CD8-positive, alpha-beta T cell (primary cell): ENCODE measurements at regions of chr1 and their contacts with region 1.

Region 1: DNA sequence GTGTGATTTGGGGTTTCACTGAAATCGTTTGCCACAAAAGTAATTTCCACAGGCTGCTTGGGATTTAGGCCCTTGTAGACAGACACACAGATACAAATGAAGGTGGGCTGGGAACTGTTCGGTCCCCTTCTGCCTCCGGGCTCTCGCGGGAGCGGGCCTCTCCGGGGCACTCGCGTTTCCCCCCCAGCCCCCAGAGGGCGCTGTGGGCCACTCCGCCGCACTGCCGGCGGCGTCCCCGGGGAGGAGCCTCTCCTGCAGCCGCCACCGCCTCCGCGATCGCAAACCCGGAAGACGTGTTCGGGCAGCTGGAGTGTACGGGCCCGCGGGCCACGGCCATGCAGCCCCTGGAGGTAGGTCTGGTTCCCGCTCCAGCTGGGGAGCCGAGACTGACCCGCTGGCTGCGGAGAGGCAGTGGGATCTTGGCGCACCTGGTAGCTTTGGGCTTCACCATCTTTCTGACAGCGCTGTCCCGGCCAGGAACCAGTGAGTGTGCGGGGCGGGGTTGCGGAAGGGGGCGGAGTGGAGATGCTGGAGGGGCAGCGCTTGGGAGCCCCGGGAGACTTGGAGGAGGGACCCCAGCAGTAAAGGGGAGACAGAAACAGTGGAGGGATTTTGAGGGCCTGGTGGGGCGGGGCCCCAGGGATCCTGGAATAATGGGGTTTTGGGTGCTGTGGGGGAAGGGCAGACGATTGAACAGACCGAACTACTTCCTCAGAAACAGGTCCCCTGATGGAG is at the start of gene CYB561D1:
- DNase-seq: peak; percentile 79 to 95 (median 88)
- ATAC-seq: peak; percentile 90
- H3K4me3 ChIP-seq: peak within 1 kb of the TSS; percentile 94 to 95
- H3K4me3 Mint-ChIP-seq: peak within 1 kb of the TSS; percentile 95
- H3K27ac ChIP-seq: peak within 1 kb of the TSS; percentile 53 to 58
- H3K27ac Mint-ChIP-seq: peak within 1 kb of the TSS; percentile 85
- H3K4me1 ChIP-seq: peaks cover 49% of the 10 kb centered on the region
- H3K4me1 Mint-ChIP-seq: peaks cover 52% of the 10 kb centered on the region
- H3K27me3 ChIP-seq: no peaks in the 10 kb centered on the region
- H3K27me3 Mint-ChIP-seq: no peaks in the 10 kb centered on the region
- CTCF ChIP-seq: peak; percentile 88
- total RNA-seq, gene CYB561D1: 10.2 to 12.3 TPM

Region 2: GRCh38 chr1:108541861-108542260 is 952.1 kb before region 1 on chr1:
- CTCF ChIA-PET with region 1: no interaction called
- POLR2A ChIA-PET with region 1: no interaction called
- intact Hi-C with region 1: no loop called
- DNase-seq: no peak
- ATAC-seq: no peak
- H3K4me3 ChIP-seq: no peak overlapping the region
- H3K4me3 Mint-ChIP-seq: no peak overlapping the region
- H3K27ac ChIP-seq: no peak overlapping the region
- H3K27ac Mint-ChIP-seq: no peak overlapping the region
- H3K4me1 ChIP-seq: no peaks in the 10 kb centered on the region
- H3K4me1 Mint-ChIP-seq: no peaks in the 10 kb centered on the region
- H3K27me3 ChIP-seq: no peaks in the 10 kb centered on the region
- H3K27me3 Mint-ChIP-seq: peaks cover 12% of the 10 kb centered on the region
- CTCF ChIP-seq: no peak

Region 3: DNA sequence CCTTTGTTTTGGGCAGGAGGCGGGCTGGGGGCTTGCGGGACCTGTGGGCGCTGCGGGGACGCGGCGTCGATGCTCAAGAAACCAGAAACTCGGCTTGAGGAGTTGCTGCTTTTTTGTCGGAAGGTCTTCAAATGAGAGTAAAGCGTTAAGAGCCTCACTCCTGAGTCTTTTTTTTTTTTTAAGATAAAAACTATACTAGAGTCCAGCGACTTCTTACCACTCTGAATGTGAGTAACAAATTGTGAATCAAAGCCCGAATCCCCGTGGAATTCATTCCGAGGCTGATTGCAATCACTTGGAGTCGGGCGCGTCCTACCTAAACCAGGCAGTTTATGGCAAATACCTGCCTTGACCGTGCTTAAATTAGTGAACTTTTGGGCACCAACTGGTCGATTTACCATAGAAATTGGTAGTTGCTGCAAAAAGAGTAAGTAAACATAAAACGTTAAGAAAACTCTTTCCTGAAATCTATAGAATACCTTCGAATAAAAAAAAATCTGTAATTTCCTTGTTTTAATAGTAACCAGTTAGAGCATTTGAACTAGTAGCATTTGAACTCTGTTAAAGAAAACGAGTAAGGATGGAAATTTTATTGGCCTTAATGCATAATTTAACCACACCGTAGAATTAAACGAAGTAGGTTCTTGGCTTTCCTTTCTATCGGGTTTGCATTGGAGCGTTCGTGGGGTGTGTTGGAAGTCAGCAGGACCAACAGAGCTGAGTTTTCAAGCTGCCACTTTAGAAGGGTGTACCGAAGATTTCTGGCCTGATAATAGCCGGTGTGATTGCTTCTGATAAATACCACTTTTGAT is 616.4 kb before region 1 on chr1:
- CTCF ChIA-PET with region 1: no interaction called
- POLR2A ChIA-PET with region 1: no interaction called
- intact Hi-C with region 1: no loop called
- DNase-seq: peak in 2 of 9 experiments; percentile 14 to 19
- ATAC-seq: no peak
- H3K4me3 ChIP-seq: peak overlapping the region; percentile 69 to 80
- H3K4me3 Mint-ChIP-seq: peak overlapping the region; percentile 95
- H3K27ac ChIP-seq: peak overlapping the region; percentile 18 to 24
- H3K27ac Mint-ChIP-seq: peak overlapping the region; percentile 46
- H3K4me1 ChIP-seq: peaks cover 6% of the 10 kb centered on the region
- H3K4me1 Mint-ChIP-seq: peaks cover 12% of the 10 kb centered on the region
- H3K27me3 ChIP-seq: peaks cover 0 to under 1% of the 10 kb centered on the region in 2 experiments
- H3K27me3 Mint-ChIP-seq: peaks cover 4% of the 10 kb centered on the region
- CTCF ChIP-seq: no peak

Region 4: GRCh38 chr1:109027841-109028240 is 466.1 kb before region 1 on chr1:
- CTCF ChIA-PET with region 1: no interaction called
- POLR2A ChIA-PET with region 1: no interaction called
- intact Hi-C with region 1: no loop called
- DNase-seq: peak in 1 of 9 experiments; percentile 15
- ATAC-seq: no peak
- H3K4me3 ChIP-seq: no peak overlapping the region
- H3K4me3 Mint-ChIP-seq: no peak overlapping the region
- H3K27ac ChIP-seq: no peak overlapping the region
- H3K27ac Mint-ChIP-seq: no peak overlapping the region
- H3K4me1 ChIP-seq: no peaks in the 10 kb centered on the region
- H3K4me1 Mint-ChIP-seq: peaks cover 2% of the 10 kb centered on the region
- H3K27me3 ChIP-seq: no peaks in the 10 kb centered on the region
- H3K27me3 Mint-ChIP-seq: no peaks in the 10 kb centered on the region
- CTCF ChIP-seq: peak; percentile 54

Region 5: DNA sequence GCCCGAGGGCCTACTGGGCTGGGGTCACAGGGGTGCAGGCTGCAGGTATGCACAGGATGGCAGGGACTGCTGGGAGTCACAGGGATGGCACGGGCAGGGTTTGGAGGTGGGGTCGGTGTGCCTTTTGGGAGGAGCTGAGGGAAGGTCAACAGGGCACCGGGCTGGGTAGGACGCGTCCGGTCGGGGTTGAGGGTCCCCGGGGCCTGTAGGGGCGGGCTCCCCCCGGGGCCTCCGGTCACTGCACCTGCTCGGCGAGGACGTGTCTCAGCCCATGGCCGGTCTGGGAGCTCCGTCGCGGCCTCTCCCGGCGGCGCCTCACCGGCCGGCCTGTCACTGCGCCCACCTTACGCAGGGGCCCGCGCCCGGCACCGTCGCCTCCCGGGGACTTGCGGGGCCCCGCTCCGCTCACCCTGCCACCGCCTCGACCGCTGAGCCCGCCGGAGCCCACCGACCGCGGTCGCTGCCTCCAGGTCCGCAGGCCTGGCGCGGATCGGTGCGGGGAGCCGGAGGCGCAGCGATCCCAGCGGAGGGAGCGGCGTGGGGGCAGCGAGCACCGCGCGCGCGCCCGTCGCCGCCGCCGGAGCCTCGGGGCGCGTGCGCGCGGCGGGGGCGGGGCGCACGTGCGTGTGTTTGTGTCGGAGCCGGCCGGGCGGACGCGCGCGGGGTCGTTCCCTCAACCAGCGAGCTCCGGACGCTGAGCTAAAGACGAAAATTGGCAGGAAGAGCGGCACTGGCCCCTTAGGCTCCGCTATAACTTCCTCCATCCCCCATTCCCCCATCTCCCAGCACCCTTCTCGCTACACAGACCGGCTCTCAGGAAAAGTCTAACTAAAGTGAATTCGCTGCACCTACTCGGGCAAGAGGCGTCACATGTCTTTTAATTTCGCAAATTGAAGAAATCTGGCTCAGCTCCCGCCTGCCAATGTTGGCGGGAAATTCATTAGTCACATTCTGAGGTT is 15.5 kb after region 1 on chr1 and contains the start of gene AMIGO1:
- CTCF ChIA-PET with region 1: interaction called, 681 read pairs
- POLR2A ChIA-PET with region 1: interaction called, 59 read pairs
- intact Hi-C with region 1: loop called in 1 of 2 experiments (anchors 1 kb)
- DNase-seq: peak; percentile 21 to 86 (median 66)
- ATAC-seq: peak; percentile 79
- H3K4me3 ChIP-seq: peak within 1 kb of the TSS; percentile 67 to 83
- H3K4me3 Mint-ChIP-seq: peak within 1 kb of the TSS; percentile 91
- H3K27ac ChIP-seq: peak within 1 kb of the TSS; percentile 45 to 54
- H3K27ac Mint-ChIP-seq: peak within 1 kb of the TSS; percentile 94
- H3K4me1 ChIP-seq: peaks cover 67% of the 10 kb centered on the region
- H3K4me1 Mint-ChIP-seq: peaks cover 68% of the 10 kb centered on the region
- H3K27me3 ChIP-seq: no peaks in the 10 kb centered on the region
- H3K27me3 Mint-ChIP-seq: no peaks in the 10 kb centered on the region
- CTCF ChIP-seq: no peak
- total RNA-seq, gene AMIGO1: 8.6 to 9.6 TPM

Region 6: GRCh38 chr1:109556563-109556962 is 62.6 kb after region 1 on chr1:
- CTCF ChIA-PET with region 1: no interaction called
- POLR2A ChIA-PET with region 1: no interaction called
- intact Hi-C with region 1: no loop called
- DNase-seq: no peak
- ATAC-seq: no peak
- H3K4me3 ChIP-seq: no peak overlapping the region
- H3K4me3 Mint-ChIP-seq: no peak overlapping the region
- H3K27ac ChIP-seq: no peak overlapping the region
- H3K27ac Mint-ChIP-seq: no peak overlapping the region
- H3K4me1 ChIP-seq: peaks cover 28% of the 10 kb centered on the region
- H3K4me1 Mint-ChIP-seq: peaks cover 79% of the 10 kb centered on the region
- H3K27me3 ChIP-seq: no peaks in the 10 kb centered on the region
- H3K27me3 Mint-ChIP-seq: no peaks in the 10 kb centered on the region
- CTCF ChIP-seq: no peak